ENCODE measurements at regions of chr4 and their contacts with region 1.

Region 1: GRCh38 chr4:143417679-143418403 is 81.2 kb downstream of the GAB1 start:
- DNase-seq: peak; percentile 74
- ATAC-seq: peak; percentile 97
- H3K4me3 ChIP-seq: no peak overlapping the region
- H3K27ac ChIP-seq: no peak overlapping the region
- H3K4me1 ChIP-seq: no peaks in the 10 kb centered on the region
- H3K27me3 ChIP-seq: no peaks in the 10 kb centered on the region
- CTCF ChIP-seq: no peak
- EP300 ChIP-seq: peak in 1 of 2 experiments; percentile 70; a peak in 3 of 4 replicates
- POLR2A ChIP-seq: no peak
- RAD21 ChIP-seq: no peak

Region 2: GRCh38 chr4:143335979-143336780 is 81.7 kb before region 1 on chr4:
- CTCF ChIA-PET with region 1: interaction called, 4 read pairs
- POLR2A ChIA-PET with region 1: interaction called, 7 read pairs
- RAD21 ChIA-PET with region 1: interaction called, 6 read pairs
- SMC1A ChIA-PET with region 1: interaction called, 11 read pairs
- in situ Hi-C with region 1: no loop called
- intact Hi-C with region 1: no loop called
- DNase-seq: no peak
- ATAC-seq: peak; percentile 66
- H3K4me3 ChIP-seq: peak overlapping the region; percentile 87
- H3K27ac ChIP-seq: no peak overlapping the region
- H3K4me1 ChIP-seq: no peaks in the 10 kb centered on the region; the same call in 1 of the 2 replicates
- H3K27me3 ChIP-seq: 0 out of 4 replicates have a peak, but pooled peaks cover 1 to 3% of the 10 kb centered on the region in 2 experiments
- CTCF ChIP-seq: no peak
- EP300 ChIP-seq: no peak
- POLR2A ChIP-seq: peak; percentile 41; the same call in 1 of the 2 replicates
- RAD21 ChIP-seq: no peak

Region 3: GRCh38 chr4:143399113-143399949 is 18.5 kb before region 1 on chr4:
- CTCF ChIA-PET with region 1: interaction called, 70 read pairs
- POLR2A ChIA-PET with region 1: interaction called, 33 read pairs
- RAD21 ChIA-PET with region 1: interaction called, 89 read pairs
- SMC1A ChIA-PET with region 1: interaction called, 166 read pairs
- in situ Hi-C with region 1: no loop called
- intact Hi-C with region 1: no loop called
- DNase-seq: no peak
- ATAC-seq: peak; percentile 76
- H3K4me3 ChIP-seq: no peak overlapping the region
- H3K27ac ChIP-seq: no peak overlapping the region
- H3K4me1 ChIP-seq: peaks cover 19% of the 10 kb centered on the region
- H3K27me3 ChIP-seq: no peaks in the 10 kb centered on the region; a peak in 1 of 4 replicates
- CTCF ChIP-seq: peak; percentile 62 to 69 (median 62)
- EP300 ChIP-seq: no peak
- POLR2A ChIP-seq: no peak
- RAD21 ChIP-seq: peak; percentile 72

Region 4: GRCh38 chr4:143431526-143432257 is 13.9 kb after region 1 on chr4:
- CTCF ChIA-PET with region 1: interaction called, 5 read pairs
- POLR2A ChIA-PET with region 1: interaction called, 3 read pairs
- RAD21 ChIA-PET with region 1: interaction called, 7 read pairs
- SMC1A ChIA-PET with region 1: interaction called, 38 read pairs
- in situ Hi-C with region 1: no loop called
- intact Hi-C with region 1: no loop called
- DNase-seq: no peak
- ATAC-seq: no peak
- H3K4me3 ChIP-seq: no peak overlapping the region
- H3K27ac ChIP-seq: no peak overlapping the region
- H3K4me1 ChIP-seq: no peaks in the 10 kb centered on the region
- H3K27me3 ChIP-seq: no peaks in the 10 kb centered on the region; a peak in 1 of 4 replicates
- CTCF ChIP-seq: no peak
- EP300 ChIP-seq: no peak
- POLR2A ChIP-seq: no peak
- RAD21 ChIP-seq: no peak

Region 5: DNA sequence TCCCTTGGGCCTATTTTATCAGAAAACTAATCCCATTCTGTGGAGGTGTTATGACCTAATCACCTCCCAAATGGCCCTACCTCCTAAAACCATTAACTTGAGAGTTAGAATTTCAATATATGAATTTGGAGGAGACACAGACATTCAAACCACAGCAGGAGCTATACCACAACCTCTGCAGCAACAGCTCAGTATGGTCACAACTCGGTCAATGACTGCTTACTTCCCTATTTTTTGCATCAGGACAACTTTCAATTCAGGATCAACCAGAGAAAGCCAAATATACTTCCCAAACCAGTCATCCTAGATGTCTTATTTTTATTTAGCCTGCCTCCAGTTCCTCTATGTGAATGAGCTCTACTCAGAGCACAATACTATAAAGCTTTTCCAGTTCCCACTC is 84.4 kb after region 1 on chr4:
- CTCF ChIA-PET with region 1: no interaction called
- POLR2A ChIA-PET with region 1: no interaction called
- RAD21 ChIA-PET with region 1: no interaction called
- SMC1A ChIA-PET with region 1: no interaction called
- in situ Hi-C with region 1: no loop called
- intact Hi-C with region 1: no loop called
- DNase-seq: no peak
- ATAC-seq: no peak
- H3K4me3 ChIP-seq: no peak overlapping the region
- H3K27ac ChIP-seq: no peak overlapping the region
- H3K4me1 ChIP-seq: no peaks in the 10 kb centered on the region
- H3K27me3 ChIP-seq: no peaks in the 10 kb centered on the region
- CTCF ChIP-seq: no peak
- EP300 ChIP-seq: no peak
- POLR2A ChIP-seq: no peak
- RAD21 ChIP-seq: no peak

Measured in GM12878 (cell line).